HCT116 (cell line): ENCODE measurements at regions of chr11 and their contacts with region 1.

Region 1: DNA sequence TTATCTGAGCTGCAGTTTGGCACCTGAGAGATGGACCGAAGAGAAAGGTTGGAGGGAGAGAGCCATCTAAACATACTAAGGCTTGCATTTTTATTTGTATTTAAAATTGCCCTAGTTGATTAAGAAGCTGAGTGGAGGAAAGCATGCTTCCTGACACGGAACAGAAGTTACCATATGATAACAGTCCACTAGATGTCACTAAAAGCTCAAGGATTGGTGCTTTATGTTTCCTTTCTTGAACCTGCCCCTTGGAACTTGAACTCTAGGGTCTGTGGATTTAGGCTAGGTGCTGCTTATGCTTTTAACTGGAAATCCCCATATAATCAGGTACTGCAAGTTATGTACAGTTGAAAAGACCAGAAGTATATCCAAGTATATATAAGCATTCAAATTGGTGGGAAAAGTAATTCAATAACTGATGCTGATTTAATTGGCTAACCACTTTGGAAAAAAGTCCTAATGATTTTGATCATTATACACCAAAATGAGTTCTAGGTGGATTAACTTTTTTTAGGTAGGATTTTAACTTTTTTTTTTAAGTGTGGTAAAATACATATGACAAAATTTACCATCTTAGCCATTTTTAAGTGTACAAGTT is 9.5 kb downstream of the RBMXL2 start:
- DNase-seq: peak; percentile 50
- ATAC-seq: peak; percentile 91
- H3K4me3 ChIP-seq: no peak overlapping the region
- H3K27ac ChIP-seq: no peak overlapping the region
- H3K4me1 ChIP-seq: no peaks in the 10 kb centered on the region
- H3K27me3 ChIP-seq: peaks cover 59% of the 10 kb centered on the region
- CTCF ChIP-seq: peak; percentile 46 to 74 (median 72)
- POLR2A ChIP-seq: no peak
- RAD21 ChIP-seq: peak; percentile 91

Region 2: DNA sequence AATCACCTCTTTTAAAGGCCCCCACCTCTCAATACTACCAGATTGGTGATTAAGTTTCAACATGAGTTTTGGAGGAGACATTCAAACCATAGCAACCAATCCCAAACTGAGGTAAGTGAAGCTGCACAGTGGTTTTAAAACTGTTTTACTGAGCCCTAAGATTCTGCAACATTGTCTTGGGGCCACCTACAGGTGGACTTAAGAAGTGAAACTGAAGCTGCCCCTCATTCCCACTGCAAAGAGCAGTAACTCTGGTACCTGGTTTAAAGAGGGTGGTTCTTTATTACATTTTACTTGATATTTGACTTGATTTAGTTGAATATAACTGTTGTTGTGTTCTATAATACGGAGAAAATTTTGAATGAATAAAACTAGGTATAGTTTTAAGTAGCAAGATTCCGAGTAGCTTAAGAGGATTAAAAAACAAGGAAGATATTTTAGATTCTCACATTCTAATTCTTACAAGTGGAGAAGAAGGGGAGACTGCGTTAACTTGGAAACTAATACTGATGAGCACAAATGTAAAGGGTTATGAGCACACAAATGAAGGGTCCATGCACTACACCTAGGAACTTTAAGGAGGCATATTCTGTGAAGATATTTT is 180.1 kb after region 1 on chr11:
- CTCF ChIA-PET with region 1: interaction called, 7 read pairs
- POLR2A ChIA-PET with region 1: no interaction called
- RAD21 ChIA-PET with region 1: no interaction called
- intact Hi-C with region 1: loop called (anchors 1 kb)
- DNase-seq: peak; percentile 24
- ATAC-seq: peak; percentile 77
- H3K4me3 ChIP-seq: no peak overlapping the region
- H3K27ac ChIP-seq: no peak overlapping the region
- H3K4me1 ChIP-seq: no peaks in the 10 kb centered on the region
- H3K27me3 ChIP-seq: peaks cover 20% of the 10 kb centered on the region; the same call in 1 of the 2 replicates
- CTCF ChIP-seq: peak in 2 of 3 experiments; percentile 59 to 69; a peak in 5 of 6 replicates
- POLR2A ChIP-seq: no peak
- RAD21 ChIP-seq: peak; percentile 57

Region 3: DNA sequence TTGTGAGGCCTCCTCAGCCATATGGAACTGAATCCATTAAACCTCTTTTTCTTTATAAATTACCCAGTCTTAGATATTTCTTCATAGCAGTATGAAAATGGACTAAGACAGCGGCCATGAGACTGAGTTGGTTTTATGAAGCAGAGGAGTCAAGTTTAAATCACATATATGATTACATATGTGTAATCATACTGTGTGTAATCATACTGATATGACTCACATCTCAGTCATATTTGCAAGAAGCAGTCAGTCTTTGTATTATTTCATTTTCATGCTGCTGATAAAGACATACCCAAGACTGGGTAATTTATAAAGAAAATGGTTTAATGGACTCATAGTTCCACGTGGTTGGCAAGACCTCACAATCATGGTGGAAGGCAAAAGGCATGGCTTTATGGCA is 243.2 kb after region 1 on chr11:
- CTCF ChIA-PET with region 1: no interaction called
- POLR2A ChIA-PET with region 1: no interaction called
- RAD21 ChIA-PET with region 1: no interaction called
- intact Hi-C with region 1: no loop called
- DNase-seq: no peak
- ATAC-seq: no peak
- H3K4me3 ChIP-seq: no peak overlapping the region
- H3K27ac ChIP-seq: no peak overlapping the region
- H3K4me1 ChIP-seq: no peaks in the 10 kb centered on the region
- H3K27me3 ChIP-seq: peaks cover 37% of the 10 kb centered on the region
- CTCF ChIP-seq: no peak
- POLR2A ChIP-seq: no peak
- RAD21 ChIP-seq: no peak

Region 4: DNA sequence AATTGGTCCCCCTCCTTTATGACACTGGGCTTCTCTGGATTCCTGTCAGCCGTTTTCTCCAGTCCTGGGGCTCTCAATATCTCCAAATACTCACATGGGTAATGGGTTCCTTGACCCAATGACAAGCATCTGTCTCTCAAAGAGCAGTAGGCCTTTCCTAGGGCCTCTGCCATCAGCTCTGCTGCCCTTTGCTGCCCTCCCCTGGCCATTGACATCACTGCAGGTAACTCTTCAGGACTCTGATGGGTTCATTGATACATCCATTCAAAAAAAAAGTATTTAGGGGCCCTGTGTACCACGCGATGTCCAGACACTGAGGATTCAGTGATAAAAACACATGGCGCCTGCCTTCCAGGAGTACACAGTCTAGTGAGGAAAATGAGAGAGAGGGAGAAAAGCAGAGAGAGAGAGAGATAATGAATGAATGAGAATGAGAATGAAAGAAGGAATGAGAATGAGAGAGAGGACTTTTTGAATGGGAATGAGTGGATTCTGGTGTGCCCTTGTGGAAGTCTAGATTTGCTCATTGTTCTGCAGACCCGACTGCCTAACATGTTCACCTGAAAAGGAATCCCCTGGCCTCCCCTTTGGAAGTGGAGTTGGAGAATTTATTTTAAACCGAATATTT is 344.4 kb after region 1 on chr11:
- CTCF ChIA-PET with region 1: interaction called, 12 read pairs
- POLR2A ChIA-PET with region 1: no interaction called
- RAD21 ChIA-PET with region 1: no interaction called
- intact Hi-C with region 1: loop called (anchors 1 kb)
- DNase-seq: peak; percentile 38
- ATAC-seq: peak; percentile 90
- H3K4me3 ChIP-seq: no peak overlapping the region
- H3K27ac ChIP-seq: no peak overlapping the region
- H3K4me1 ChIP-seq: no peaks in the 10 kb centered on the region
- H3K27me3 ChIP-seq: peaks cover 73% of the 10 kb centered on the region
- CTCF ChIP-seq: peak; percentile 53 to 86 (median 85); a peak in 5 of 6 replicates
- POLR2A ChIP-seq: no peak
- RAD21 ChIP-seq: peak; percentile 78

Region 5: DNA sequence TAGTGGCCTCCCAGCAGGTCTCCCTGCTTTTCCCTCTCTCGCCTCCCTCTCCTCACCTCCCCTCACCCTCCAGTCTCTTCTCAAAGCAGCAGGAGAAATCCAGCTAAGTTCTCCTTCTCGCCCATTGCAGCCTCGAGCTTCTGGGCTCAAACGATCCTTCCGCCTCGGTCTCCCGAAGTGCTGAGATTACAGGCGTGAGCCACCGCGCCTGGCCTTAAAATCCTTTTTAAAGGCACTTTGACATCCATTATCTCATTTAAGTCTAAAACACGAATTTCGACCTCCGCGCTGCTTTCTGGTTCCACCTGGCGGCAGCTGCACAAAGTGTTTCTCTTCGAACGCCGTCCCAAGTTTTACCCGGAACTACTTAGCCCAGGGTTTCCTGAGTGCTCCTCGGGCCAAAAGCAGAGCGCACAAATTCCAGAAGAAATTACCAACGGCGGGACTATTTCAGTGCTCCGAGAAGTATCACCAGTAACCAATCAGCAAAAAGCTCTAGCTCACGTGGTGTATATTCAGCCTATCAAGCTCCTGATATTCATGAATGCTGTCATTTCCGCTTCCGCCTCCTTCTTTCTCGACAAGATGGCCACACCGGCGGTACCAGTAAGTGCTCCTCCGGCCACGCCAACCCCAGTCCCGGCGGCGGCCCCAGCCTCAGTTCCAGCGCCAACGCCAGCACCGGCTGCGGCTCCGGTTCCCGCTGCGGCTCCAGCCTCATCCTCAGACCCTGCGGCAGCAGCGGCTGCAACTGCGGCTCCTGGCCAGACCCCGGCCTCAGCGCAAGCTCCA is 888.6 kb after region 1 on chr11 and contains the start of gene EIF3F:
- CTCF ChIA-PET with region 1: interaction called, 9 read pairs
- POLR2A ChIA-PET with region 1: no interaction called
- RAD21 ChIA-PET with region 1: no interaction called
- intact Hi-C with region 1: loop called (anchors 5 kb)
- DNase-seq: peak; percentile 100
- ATAC-seq: peak; percentile 97
- H3K4me3 ChIP-seq: peak within 1 kb of the TSS; percentile 93
- H3K27ac ChIP-seq: peak within 1 kb of the TSS; percentile 13; the same call in 1 of the 2 replicates
- H3K4me1 ChIP-seq: peaks cover 10 to 21% of the 10 kb centered on the region in 2 experiments; a peak in 3 of 4 replicates
- H3K27me3 ChIP-seq: no peaks in the 10 kb centered on the region
- CTCF ChIP-seq: peak; percentile 77 to 90 (median 77)
- POLR2A ChIP-seq: no peak
- RAD21 ChIP-seq: peak; percentile 83
- total RNA-seq, gene EIF3F: 313 TPM